ENCODE measurements at regions of chr2 and their contacts with region 1.

Region 1: GRCh38 chr2:44044281-44044720 is 48.5 kb upstream of the LRPPRC start:
- DNase-seq: peak; percentile 90
- H3K4me3 Mint-ChIP-seq: no peak overlapping the region
- H3K27ac Mint-ChIP-seq: no peak overlapping the region
- H3K4me1 Mint-ChIP-seq: no peaks in the 10 kb centered on the region
- H3K27me3 Mint-ChIP-seq: no peaks in the 10 kb centered on the region

Region 2: DNA sequence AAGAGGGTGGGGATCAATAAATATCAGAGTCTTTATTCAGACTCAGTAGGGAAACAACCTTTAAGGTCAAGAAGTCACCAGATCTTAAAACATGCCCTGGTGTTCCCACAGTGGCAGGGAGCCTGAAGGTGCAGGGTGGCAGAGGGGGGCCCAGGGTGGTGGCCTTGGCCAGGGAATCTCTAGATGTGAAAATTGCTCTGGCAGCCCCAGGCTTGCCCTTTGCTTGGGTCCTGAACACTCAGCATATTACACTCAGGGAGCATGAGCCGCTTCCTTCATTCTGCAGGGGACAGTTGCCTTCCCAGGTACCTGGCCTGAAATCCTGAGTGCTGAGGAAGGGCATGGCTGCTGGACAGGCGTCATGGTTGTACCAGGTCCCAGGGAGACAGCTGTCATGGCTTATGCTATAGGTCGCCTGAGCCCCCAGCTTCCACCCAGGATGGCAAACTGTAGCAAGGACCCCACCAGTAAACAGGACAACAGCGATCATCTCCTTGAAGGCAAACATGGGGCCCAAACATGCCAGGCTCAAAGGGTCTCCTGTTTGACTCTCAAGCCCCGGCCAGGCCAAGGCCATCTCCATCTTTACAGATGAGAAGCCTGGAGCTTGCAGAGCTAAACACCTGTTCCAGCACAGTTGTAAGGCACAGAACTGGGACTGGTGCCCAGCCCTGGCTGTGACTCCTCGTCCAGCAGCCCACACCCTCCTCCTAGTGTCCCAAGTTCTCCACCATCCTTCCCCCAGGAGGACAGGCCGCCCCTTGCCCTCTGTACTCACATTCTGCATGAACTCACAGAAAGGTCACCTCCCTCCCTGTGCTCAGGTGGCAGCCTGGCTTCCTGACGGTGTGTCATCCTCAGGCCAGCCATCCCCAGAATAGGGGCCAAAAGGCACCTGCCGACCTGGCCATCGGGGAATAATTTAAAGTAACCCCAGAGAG is 190.9 kb before region 1 on chr2:
- CTCF ChIA-PET with region 1: no interaction called
- POLR2A ChIA-PET with region 1: no interaction called
- intact Hi-C with region 1: no loop called
- DNase-seq: no peak
- H3K4me3 Mint-ChIP-seq: no peak overlapping the region
- H3K27ac Mint-ChIP-seq: no peak overlapping the region
- H3K4me1 Mint-ChIP-seq: no peaks in the 10 kb centered on the region
- H3K27me3 Mint-ChIP-seq: peaks cover 24% of the 10 kb centered on the region

Region 3: GRCh38 chr2:43877782-43878464 is 166.4 kb before region 1 on chr2:
- CTCF ChIA-PET with region 1: interaction called, 4 read pairs
- POLR2A ChIA-PET with region 1: no interaction called
- intact Hi-C with region 1: loop called (anchors 5 kb)
- DNase-seq: peak; percentile 83
- H3K4me3 Mint-ChIP-seq: no peak overlapping the region
- H3K27ac Mint-ChIP-seq: no peak overlapping the region
- H3K4me1 Mint-ChIP-seq: peaks cover 3% of the 10 kb centered on the region
- H3K27me3 Mint-ChIP-seq: peaks cover 7% of the 10 kb centered on the region

Region 4: GRCh38 chr2:43958397-43959275 is 85.7 kb before region 1 on chr2:
- CTCF ChIA-PET with region 1: no interaction called
- POLR2A ChIA-PET with region 1: no interaction called
- intact Hi-C with region 1: no loop called
- DNase-seq: no peak
- H3K4me3 Mint-ChIP-seq: no peak overlapping the region
- H3K27ac Mint-ChIP-seq: no peak overlapping the region
- H3K4me1 Mint-ChIP-seq: peaks cover 1% of the 10 kb centered on the region
- H3K27me3 Mint-ChIP-seq: no peaks in the 10 kb centered on the region

Region 5: DNA sequence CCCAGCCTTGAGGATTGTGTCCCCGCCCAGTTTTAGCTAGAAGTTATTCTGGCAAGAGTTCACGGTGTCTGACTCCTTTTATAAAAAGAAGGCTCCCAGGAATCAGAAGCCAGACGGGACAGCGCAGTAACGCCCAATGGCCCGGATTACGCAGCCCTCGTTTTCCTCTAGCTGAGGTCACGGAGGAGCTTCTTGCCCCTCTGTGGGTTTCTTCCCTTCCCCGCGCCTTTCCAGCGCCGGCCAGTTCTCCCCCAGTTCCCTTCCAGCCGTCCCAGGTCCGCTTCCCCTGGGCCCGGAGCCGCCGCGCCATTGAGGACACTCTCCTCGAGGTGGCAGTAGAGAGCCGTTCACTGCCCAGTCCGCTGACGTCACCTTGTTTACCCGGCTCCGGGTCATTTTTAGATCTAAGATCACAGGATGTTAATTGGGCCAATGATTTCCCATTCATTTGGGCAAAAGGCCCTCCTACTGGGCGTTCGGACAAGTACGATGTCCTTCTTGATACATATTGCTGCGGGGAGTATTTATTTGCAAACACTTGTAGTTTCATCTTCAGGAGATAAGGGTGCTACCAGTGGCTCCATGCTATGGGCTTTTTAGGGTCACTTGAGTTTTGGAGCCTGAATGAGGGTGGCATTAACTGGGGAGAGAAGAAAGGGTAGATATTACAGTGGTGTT is 42.9 kb after region 1 on chr2:
- CTCF ChIA-PET with region 1: interaction called, 9 read pairs
- POLR2A ChIA-PET with region 1: no interaction called
- intact Hi-C with region 1: loop called (anchors 1 kb)
- DNase-seq: peak; percentile 90
- H3K4me3 Mint-ChIP-seq: peak overlapping the region; percentile 64
- H3K27ac Mint-ChIP-seq: peak overlapping the region; percentile 6
- H3K4me1 Mint-ChIP-seq: peaks cover 11% of the 10 kb centered on the region
- H3K27me3 Mint-ChIP-seq: no peaks in the 10 kb centered on the region

Region 6: GRCh38 chr2:44167940-44168680 is 123.8 kb after region 1 on chr2:
- CTCF ChIA-PET with region 1: no interaction called
- POLR2A ChIA-PET with region 1: no interaction called
- intact Hi-C with region 1: no loop called
- DNase-seq: peak; percentile 98
- H3K4me3 Mint-ChIP-seq: peak overlapping the region; percentile 87
- H3K27ac Mint-ChIP-seq: peak overlapping the region; percentile 99
- H3K4me1 Mint-ChIP-seq: peaks cover 34% of the 10 kb centered on the region
- H3K27me3 Mint-ChIP-seq: no peaks in the 10 kb centered on the region

Region 7: GRCh38 chr2:44291281-44292248 is 247.3 kb after region 1 on chr2:
- CTCF ChIA-PET with region 1: interaction called, 17 read pairs
- POLR2A ChIA-PET with region 1: no interaction called
- intact Hi-C with region 1: loop called (anchors 5 kb)
- DNase-seq: no peak
- H3K4me3 Mint-ChIP-seq: no peak overlapping the region
- H3K27ac Mint-ChIP-seq: no peak overlapping the region
- H3K4me1 Mint-ChIP-seq: peaks cover 9% of the 10 kb centered on the region
- H3K27me3 Mint-ChIP-seq: peaks cover 5% of the 10 kb centered on the region

Region 8: DNA sequence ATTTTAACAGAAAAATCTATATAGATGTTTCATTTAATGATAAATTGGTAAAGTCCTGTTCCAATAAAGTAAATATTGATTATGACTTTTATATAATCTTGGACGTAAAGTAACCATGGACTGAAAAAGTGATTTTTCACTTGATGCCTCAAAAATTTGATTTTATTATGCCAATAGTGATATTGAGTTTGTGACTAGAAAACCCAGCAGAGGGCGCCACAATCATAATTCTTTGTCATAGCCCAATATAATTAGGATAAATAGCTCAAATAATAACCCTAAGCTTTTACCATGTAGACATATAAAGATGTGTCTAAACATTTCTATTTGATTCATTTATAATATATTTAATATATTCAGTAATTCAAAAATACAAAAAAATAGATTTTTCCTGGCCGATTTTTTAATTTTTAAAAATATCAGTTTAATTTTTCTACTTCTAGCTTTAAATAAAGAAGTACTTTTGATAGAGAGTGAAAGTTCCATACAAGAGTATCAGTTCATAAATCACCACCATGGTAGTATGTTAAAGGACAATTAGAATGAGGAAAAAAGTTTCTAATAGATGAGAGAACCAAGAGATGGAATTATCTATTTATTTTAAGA is 348.1 kb after region 1 on chr2:
- CTCF ChIA-PET with region 1: interaction called, 10 read pairs
- POLR2A ChIA-PET with region 1: no interaction called
- intact Hi-C with region 1: no loop called
- DNase-seq: peak; percentile 41
- H3K4me3 Mint-ChIP-seq: no peak overlapping the region
- H3K27ac Mint-ChIP-seq: no peak overlapping the region
- H3K4me1 Mint-ChIP-seq: peaks cover 2% of the 10 kb centered on the region
- H3K27me3 Mint-ChIP-seq: no peaks in the 10 kb centered on the region

Region 9: GRCh38 chr2:44974064-44974715 is 929.9 kb after region 1 on chr2:
- CTCF ChIA-PET with region 1: no interaction called
- POLR2A ChIA-PET with region 1: no interaction called
- intact Hi-C with region 1: loop called (anchors 5 kb)
- DNase-seq: no peak
- H3K4me3 Mint-ChIP-seq: no peak overlapping the region
- H3K27ac Mint-ChIP-seq: no peak overlapping the region
- H3K4me1 Mint-ChIP-seq: no peaks in the 10 kb centered on the region
- H3K27me3 Mint-ChIP-seq: peaks cover 8% of the 10 kb centered on the region

Measured in activated CD4-positive, alpha-beta memory T cell treated with anti-CD3 and anti-CD28 coated beads for 36 hours (primary cell).